Breast epithelium (tissue), 4 donors: ENCODE measurements at regions of chr5 and their contacts with region 1.

Region 1: DNA sequence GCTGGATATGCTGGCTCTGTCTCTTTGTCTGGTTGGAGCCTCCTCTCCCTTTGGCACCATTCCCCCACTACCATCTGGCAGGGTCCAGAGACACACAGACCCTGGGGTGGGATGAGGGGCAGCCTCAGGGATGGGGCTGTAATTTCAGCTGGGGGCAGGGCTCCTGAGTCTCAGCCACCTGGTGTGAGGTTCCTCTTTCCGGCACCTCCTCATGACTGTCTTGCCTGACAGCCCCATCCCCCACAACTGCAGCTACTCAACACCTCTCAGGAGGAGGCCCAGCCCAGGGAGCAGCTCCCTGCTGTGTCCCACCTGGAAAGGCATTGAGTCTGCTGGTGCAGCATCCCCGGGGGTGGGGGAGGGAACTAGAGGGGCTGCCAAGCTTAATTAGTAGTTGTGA is 11.7 kb upstream of the RPS14 start:
- DNase-seq: no peak
- H3K4me3 ChIP-seq: no peak overlapping the region
- H3K27ac ChIP-seq: peak overlapping the region; percentile 46 to 66
- H3K4me1 ChIP-seq: peaks cover 0 to 13% of the 10 kb centered on the region in 2 donors
- H3K27me3 ChIP-seq: no peaks in the 10 kb centered on the region
- CTCF ChIP-seq: no peak
- POLR2A ChIP-seq: no peak

Region 2: GRCh38 chr5:150538007-150538917 is 77.0 kb after region 1 on chr5:
- intact Hi-C with region 1: loop called (anchors 5 kb)
- DNase-seq: peak; percentile 57 to 63
- H3K4me3 ChIP-seq: no peak overlapping the region
- H3K27ac ChIP-seq: peak overlapping the region in 1 of 2 donors; percentile 24
- H3K4me1 ChIP-seq: no peaks in the 10 kb centered on the region
- H3K27me3 ChIP-seq: no peaks in the 10 kb centered on the region
- CTCF ChIP-seq: no peak
- POLR2A ChIP-seq: no peak

Region 3: GRCh38 chr5:150656191-150657132 is 195.2 kb after region 1 on chr5:
- intact Hi-C with region 1: loop called (anchors 10 kb)
- DNase-seq: peak in 1 of 2 donors; percentile 70
- H3K4me3 ChIP-seq: peak overlapping the region; percentile 48 to 82 (median 57)
- H3K27ac ChIP-seq: peak overlapping the region; percentile 50 to 80
- H3K4me1 ChIP-seq: peaks cover 0 to 7% of the 10 kb centered on the region in 2 donors
- H3K27me3 ChIP-seq: no peaks in the 10 kb centered on the region
- CTCF ChIP-seq: peak; percentile 15 to 55 (median 30)
- POLR2A ChIP-seq: no peak